ENCODE measurements at regions of chr2 and their contacts with region 1.

Region 1: GRCh38 chr2:234792621-234793022 is 159.2 kb upstream of the SH3BP4 start:
- DNase-seq: no peak

Region 2: DNA sequence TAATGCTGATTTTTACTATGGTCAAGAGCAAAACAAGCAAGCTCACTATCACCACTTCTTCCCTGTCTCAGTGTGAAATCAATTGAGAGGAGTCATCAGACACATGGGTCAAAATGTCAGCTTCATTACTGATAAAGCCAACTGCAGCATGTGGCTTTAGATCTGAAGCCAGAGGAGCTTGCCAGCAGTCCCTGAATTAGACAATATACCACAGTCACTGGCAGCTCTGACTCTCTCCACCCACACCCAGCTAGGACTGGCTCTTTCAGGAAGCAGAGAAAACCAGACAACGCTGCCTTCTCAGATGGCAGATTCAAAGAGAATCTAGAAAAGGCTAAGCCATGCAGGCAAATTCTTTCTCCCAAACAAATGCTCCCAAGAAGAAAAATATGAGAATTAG is 1491.6 kb after region 1 on chr2:
- intact Hi-C with region 1: loop called in 1 of 2 experiments (anchors 5 kb)
- DNase-seq: no peak

Region 3: DNA sequence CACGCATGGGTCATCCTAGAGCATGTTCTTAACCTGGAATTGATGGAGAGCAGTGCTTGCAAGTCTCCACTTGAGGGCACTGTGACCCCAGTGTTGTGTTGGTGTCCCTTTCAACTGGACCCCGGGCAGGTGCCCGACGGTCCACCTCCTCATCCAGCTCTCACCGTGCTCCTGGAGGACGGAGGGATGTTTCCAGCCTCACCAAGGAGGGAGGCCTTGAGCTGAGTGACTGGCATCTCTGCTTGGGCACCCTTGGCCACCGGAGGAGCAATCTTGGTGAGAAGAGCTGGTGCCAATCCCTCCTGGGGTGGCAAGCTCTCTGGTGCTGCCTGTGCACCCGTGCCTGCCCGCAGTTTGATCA is 1517.0 kb after region 1 on chr2:
- intact Hi-C with region 1: no loop called
- DNase-seq: no peak